Aorta (tissue), 5 donors: ENCODE measurements at regions of chr6 and their contacts with region 1.

Region 1: GRCh38 chr6:112253841-112254816 is at the start of gene LAMA4:
- DNase-seq: peak; percentile 56 to 84
- ATAC-seq: peak; percentile 73
- H3K4me3 ChIP-seq: peak within 1 kb of the TSS; percentile 79 to 81
- H3K27ac ChIP-seq: peak within 1 kb of the TSS in 1 of 2 donors; percentile 61
- H3K4me1 ChIP-seq: peaks cover 2 to 4% of the 10 kb centered on the region in 2 donors
- H3K27me3 ChIP-seq: no peaks in the 10 kb centered on the region
- total RNA-seq, gene LAMA4: 71.4 to 150 TPM

Region 2: DNA sequence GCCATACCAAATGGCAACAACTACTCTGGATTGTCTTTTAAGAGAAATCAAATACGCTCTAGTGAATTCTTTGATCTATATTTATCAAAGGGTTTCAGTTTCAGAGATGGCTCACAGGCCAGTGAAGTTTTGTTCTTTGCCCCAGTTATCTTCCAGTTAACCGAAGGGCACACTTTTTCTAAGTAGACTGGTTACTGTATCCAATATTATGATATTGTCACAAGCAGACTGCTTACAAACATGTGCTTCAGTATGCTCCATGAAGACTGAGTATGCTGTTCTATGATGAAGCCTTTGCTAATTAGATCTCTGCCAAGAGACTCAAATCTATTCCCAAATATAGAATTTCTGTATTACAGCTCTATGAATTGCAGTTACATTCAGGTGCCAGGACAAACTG is 952.2 kb before region 1 on chr6:
- intact Hi-C with region 1: no loop called
- DNase-seq: no peak
- ATAC-seq: no peak
- H3K4me3 ChIP-seq: no peak overlapping the region
- H3K27ac ChIP-seq: no peak overlapping the region
- H3K4me1 ChIP-seq: peaks cover 0 to 2% of the 10 kb centered on the region in 2 donors
- H3K27me3 ChIP-seq: no peaks in the 10 kb centered on the region

Region 3: GRCh38 chr6:112188906-112189305 is 65.2 kb before region 1 on chr6:
- intact Hi-C with region 1: loop called in 1 of 2 experiments (anchors 5 kb)
- DNase-seq: no peak
- ATAC-seq: no peak
- H3K4me3 ChIP-seq: no peak overlapping the region
- H3K27ac ChIP-seq: no peak overlapping the region
- H3K4me1 ChIP-seq: peaks cover 0 to 2% of the 10 kb centered on the region in 2 donors
- H3K27me3 ChIP-seq: no peaks in the 10 kb centered on the region

Region 4: GRCh38 chr6:112203577-112204349 is 50.4 kb before region 1 on chr6:
- intact Hi-C with region 1: loop called in 1 of 2 experiments (anchors 5 kb)
- DNase-seq: no peak
- ATAC-seq: no peak
- H3K4me3 ChIP-seq: no peak overlapping the region
- H3K27ac ChIP-seq: no peak overlapping the region
- H3K4me1 ChIP-seq: peaks cover 0 to 11% of the 10 kb centered on the region in 2 donors
- H3K27me3 ChIP-seq: no peaks in the 10 kb centered on the region

Region 5: GRCh38 chr6:112296122-112296521 is 42.0 kb after region 1 on chr6:
- intact Hi-C with region 1: loop called in 1 of 2 experiments (anchors 5 kb)
- DNase-seq: no peak
- ATAC-seq: no peak
- H3K4me3 ChIP-seq: no peak overlapping the region
- H3K27ac ChIP-seq: no peak overlapping the region
- H3K4me1 ChIP-seq: peaks cover 0 to 6% of the 10 kb centered on the region in 2 donors
- H3K27me3 ChIP-seq: no peaks in the 10 kb centered on the region

Region 6: DNA sequence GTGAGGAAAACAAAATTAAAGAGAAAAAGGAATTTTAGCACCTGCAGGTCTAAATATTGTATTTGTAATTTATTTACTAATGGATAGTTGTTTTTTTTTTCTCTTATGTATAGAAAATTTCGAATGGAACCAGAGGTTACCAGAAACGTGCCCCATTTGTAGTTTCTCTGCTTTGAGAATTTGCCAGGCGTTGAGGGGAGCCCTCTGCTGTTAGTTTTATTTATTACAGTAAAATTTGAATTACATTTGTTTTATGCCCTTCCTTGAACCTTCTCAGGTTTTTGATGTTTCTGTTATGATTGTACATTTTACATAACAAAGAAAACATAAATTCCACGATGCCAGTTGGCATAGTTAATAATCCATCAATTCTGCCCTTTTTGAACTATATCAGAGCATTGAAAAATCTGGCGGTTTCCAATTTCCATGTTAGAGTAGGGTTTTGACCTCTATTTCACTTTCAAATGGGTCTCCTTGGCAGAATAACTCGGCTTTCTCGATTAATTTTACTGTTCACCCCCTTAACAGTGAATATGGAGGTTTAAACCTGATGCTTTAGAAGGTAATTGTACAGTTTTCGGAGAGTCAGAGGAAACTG is 57.9 kb after region 1 on chr6:
- intact Hi-C with region 1: loop called in 1 of 2 experiments (anchors 2 kb)
- DNase-seq: no peak
- ATAC-seq: no peak
- H3K4me3 ChIP-seq: no peak overlapping the region
- H3K27ac ChIP-seq: no peak overlapping the region
- H3K4me1 ChIP-seq: no peaks in the 10 kb centered on the region
- H3K27me3 ChIP-seq: no peaks in the 10 kb centered on the region